CD8-positive, alpha-beta T cell (primary cell): ENCODE measurements at regions of chr12 and their contacts with region 1.

Region 1: GRCh38 chr12:75390899-75391538 is at the start of gene GLIPR1L2:
- DNase-seq: peak; percentile 77 to 96 (median 85)
- ATAC-seq: peak; percentile 88
- H3K4me3 ChIP-seq: peak within 1 kb of the TSS; percentile 70 to 72
- H3K4me3 Mint-ChIP-seq: peak within 1 kb of the TSS; percentile 91
- H3K27ac ChIP-seq: peak within 1 kb of the TSS; percentile 70 to 90
- H3K27ac Mint-ChIP-seq: peak within 1 kb of the TSS; percentile 95
- H3K4me1 ChIP-seq: peaks cover 26% of the 10 kb centered on the region
- H3K4me1 Mint-ChIP-seq: peaks cover 46% of the 10 kb centered on the region
- H3K27me3 ChIP-seq: no peaks in the 10 kb centered on the region
- H3K27me3 Mint-ChIP-seq: no peaks in the 10 kb centered on the region
- CTCF ChIP-seq: peak; percentile 53
- total RNA-seq, gene GLIPR1L2: not detected

Region 2: GRCh38 chr12:75334384-75335030 is 56.5 kb before region 1 on chr12 and contains the start of gene GLIPR1L1:
- CTCF ChIA-PET with region 1: interaction called, 8 read pairs
- POLR2A ChIA-PET with region 1: interaction called, 5 read pairs
- intact Hi-C with region 1: loop called (anchors 2 to 5 kb)
- DNase-seq: peak; percentile 69 to 88 (median 84)
- ATAC-seq: peak; percentile 81
- H3K4me3 ChIP-seq: peak within 1 kb of the TSS; percentile 28 to 34
- H3K4me3 Mint-ChIP-seq: peak within 1 kb of the TSS; percentile 62
- H3K27ac ChIP-seq: no peak within 1 kb of the TSS
- H3K27ac Mint-ChIP-seq: no peak within 1 kb of the TSS
- H3K4me1 ChIP-seq: peaks cover 11% of the 10 kb centered on the region
- H3K4me1 Mint-ChIP-seq: peaks cover 15% of the 10 kb centered on the region
- H3K27me3 ChIP-seq: peaks cover 0 to 4% of the 10 kb centered on the region in 2 experiments
- H3K27me3 Mint-ChIP-seq: peaks cover 24% of the 10 kb centered on the region
- CTCF ChIP-seq: peak; percentile 89
- total RNA-seq, gene GLIPR1L1: not detected

Region 3: DNA sequence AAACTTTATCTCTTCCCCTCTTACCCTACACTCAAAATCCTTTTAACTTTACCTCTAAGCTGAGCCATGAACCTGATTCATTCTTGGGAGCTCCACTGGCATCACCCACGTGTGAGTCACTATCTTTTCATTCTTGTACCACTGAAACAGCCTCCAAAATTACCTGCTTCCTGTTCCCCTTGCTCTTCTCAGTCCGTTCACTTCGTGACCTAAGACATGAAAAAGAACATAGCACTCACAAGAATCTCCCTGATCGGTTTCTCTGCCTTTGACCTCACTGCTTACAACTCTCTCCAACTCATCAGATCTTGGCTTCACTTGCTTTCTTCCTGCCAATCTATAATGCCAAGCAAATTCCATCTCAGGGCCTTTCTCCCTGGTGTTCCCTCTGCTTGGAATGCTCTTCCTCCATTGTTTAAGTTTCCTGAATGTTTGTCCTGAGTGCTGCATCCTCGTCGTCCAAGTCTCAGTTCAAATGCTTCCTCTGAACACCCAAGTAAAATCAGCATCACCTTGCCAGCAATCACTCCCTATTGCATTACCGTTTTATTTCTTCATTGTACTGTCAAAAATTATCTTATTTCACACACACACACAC is 98.7 kb after region 1 on chr12:
- CTCF ChIA-PET with region 1: interaction called, 11 read pairs
- POLR2A ChIA-PET with region 1: interaction called, 4 read pairs
- intact Hi-C with region 1: loop called in 1 of 2 experiments (anchors 5 kb)
- DNase-seq: peak in 1 of 9 experiments; percentile 23
- ATAC-seq: peak; percentile 43
- H3K4me3 ChIP-seq: no peak overlapping the region
- H3K4me3 Mint-ChIP-seq: no peak overlapping the region
- H3K27ac ChIP-seq: peak overlapping the region in 1 of 2 experiments; percentile 27
- H3K27ac Mint-ChIP-seq: peak overlapping the region; percentile 68
- H3K4me1 ChIP-seq: no peaks in the 10 kb centered on the region
- H3K4me1 Mint-ChIP-seq: peaks cover 47% of the 10 kb centered on the region
- H3K27me3 ChIP-seq: no peaks in the 10 kb centered on the region
- H3K27me3 Mint-ChIP-seq: no peaks in the 10 kb centered on the region
- CTCF ChIP-seq: no peak

Region 4: DNA sequence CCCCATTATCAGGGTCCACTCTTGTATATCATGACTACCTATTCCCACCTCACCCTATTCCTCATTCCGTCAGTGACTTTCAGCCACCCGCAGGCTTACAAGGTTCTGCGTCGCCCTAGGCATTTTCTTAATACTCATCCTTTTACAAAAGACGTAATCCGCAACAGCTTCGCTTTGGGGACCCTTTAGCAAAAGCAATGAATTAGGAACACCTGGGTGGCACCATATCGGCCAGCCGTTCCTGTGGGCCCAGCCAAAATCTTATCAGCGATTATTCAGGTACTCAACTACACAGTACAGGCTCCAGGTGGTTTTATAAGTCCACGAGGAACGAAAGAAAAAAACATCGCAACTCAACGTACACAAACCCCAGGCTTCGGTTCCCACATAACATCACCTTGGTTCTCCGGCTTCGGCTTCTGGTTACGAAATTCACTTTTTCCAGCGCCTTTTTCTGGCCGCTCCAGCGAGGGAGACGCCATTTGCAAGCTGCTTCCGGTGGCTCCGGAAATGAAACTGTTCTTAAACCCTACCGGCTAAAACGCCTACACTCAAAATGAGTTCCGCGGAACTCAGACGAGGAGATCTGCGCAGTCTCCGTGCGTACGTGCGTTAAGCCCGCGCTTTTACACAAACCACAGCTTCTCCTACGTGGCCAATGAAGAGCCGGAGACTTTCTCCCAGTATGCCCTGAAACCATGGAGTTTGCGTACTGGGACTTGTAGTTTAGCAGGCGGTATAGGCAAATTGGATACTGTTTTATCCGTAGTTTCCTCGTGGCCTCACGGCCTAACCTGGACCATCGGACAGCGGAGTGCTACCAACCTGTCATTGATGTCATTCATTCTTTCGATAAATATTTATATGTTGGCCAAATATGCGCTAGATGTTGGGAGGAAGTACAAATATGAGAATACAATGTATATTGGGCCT is 120.4 kb after region 1 on chr12 and contains the start of gene KRR1:
- CTCF ChIA-PET with region 1: interaction called, 8 read pairs
- POLR2A ChIA-PET with region 1: interaction called, 10 read pairs
- intact Hi-C with region 1: loop called in 1 of 2 experiments (anchors 1 kb)
- DNase-seq: peak; percentile 75 to 98 (median 88)
- ATAC-seq: peak; percentile 95
- H3K4me3 ChIP-seq: peak within 1 kb of the TSS; percentile 89 to 93
- H3K4me3 Mint-ChIP-seq: peak within 1 kb of the TSS; percentile 98
- H3K27ac ChIP-seq: peak within 1 kb of the TSS; percentile 89
- H3K27ac Mint-ChIP-seq: peak within 1 kb of the TSS; percentile 98
- H3K4me1 ChIP-seq: peaks cover 18% of the 10 kb centered on the region
- H3K4me1 Mint-ChIP-seq: peaks cover 33% of the 10 kb centered on the region
- H3K27me3 ChIP-seq: no peaks in the 10 kb centered on the region
- H3K27me3 Mint-ChIP-seq: no peaks in the 10 kb centered on the region
- CTCF ChIP-seq: no peak
- total RNA-seq, gene KRR1: 158 to 161 TPM

Region 5: GRCh38 chr12:76763743-76764675 is 1373.0 kb after region 1 on chr12 and contains the start of gene ZDHHC17:
- CTCF ChIA-PET with region 1: no interaction called
- POLR2A ChIA-PET with region 1: no interaction called
- intact Hi-C with region 1: loop called in 1 of 2 experiments (anchors 5 kb)
- DNase-seq: peak; percentile 89 to 96 (median 93)
- ATAC-seq: peak; percentile 82
- H3K4me3 ChIP-seq: peak within 1 kb of the TSS; percentile 73 to 99
- H3K4me3 Mint-ChIP-seq: peak within 1 kb of the TSS; percentile 98
- H3K27ac ChIP-seq: peak within 1 kb of the TSS; percentile 87 to 94
- H3K27ac Mint-ChIP-seq: peak within 1 kb of the TSS; percentile 99
- H3K4me1 ChIP-seq: peaks cover 26% of the 10 kb centered on the region
- H3K4me1 Mint-ChIP-seq: peaks cover 47% of the 10 kb centered on the region
- H3K27me3 ChIP-seq: no peaks in the 10 kb centered on the region
- H3K27me3 Mint-ChIP-seq: no peaks in the 10 kb centered on the region
- CTCF ChIP-seq: no peak
- total RNA-seq, gene ZDHHC17: 38.1 to 40.3 TPM